Activated naive CD4-positive, alpha-beta T cell treated with anti-CD3 and anti-CD28 coated beads, Interleukin-2, amount 10 ng/mL, durations not matched to agents 7 days and 5 days (primary cell): ENCODE measurements at regions of chr2 and their contacts with region 1.

Region 1: GRCh38 chr2:68839260-68839833 is 31.9 kb downstream of the BMP10 start:
- DNase-seq: peak; percentile 46
- H3K4me3 Mint-ChIP-seq: no peak overlapping the region
- H3K27ac Mint-ChIP-seq: no peak overlapping the region
- H3K4me1 Mint-ChIP-seq: peaks cover 34% of the 10 kb centered on the region
- H3K27me3 Mint-ChIP-seq: peaks cover 3% of the 10 kb centered on the region

Region 2: DNA sequence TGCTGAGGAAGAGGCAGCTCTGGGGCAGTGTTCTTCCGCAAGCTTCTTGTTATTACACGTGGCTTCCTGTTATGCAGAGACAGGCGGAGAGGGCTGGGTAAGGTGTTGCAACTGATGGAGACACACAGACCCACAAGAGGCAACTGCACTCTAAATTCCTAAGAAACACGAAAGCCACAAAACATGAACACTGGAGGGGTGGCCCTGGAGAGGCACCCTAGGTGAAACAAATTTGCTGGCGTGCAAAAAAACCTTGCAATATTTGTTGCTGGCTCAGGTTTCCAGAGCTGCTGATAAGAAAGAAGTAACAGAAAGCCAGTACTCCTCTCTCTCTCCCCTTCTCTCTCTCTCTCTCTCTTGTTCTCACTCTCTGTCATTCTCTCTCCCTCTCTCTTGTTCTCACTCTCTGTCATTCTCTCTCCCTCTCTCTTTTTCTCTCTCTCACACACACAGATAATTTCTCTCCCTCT is 72.9 kb before region 1 on chr2:
- CTCF ChIA-PET with region 1: interaction called, 10 read pairs
- DNase-seq: peak; percentile 78
- H3K4me3 Mint-ChIP-seq: peak overlapping the region; percentile 71
- H3K27ac Mint-ChIP-seq: peak overlapping the region; percentile 99
- H3K4me1 Mint-ChIP-seq: peaks cover 98% of the 10 kb centered on the region
- H3K27me3 Mint-ChIP-seq: no peaks in the 10 kb centered on the region